Caco-2 (cell line): ENCODE measurements at regions of chr11 and their contacts with region 1.

Region 1: GRCh38 chr11:13907678-13908077 is 54.8 kb upstream of the SPON1 start:
- DNase-seq: no peak
- H3K4me3 ChIP-seq: no peak overlapping the region
- H3K4me3 Mint-ChIP-seq: no peak overlapping the region
- H3K27ac Mint-ChIP-seq: no peak overlapping the region
- H3K4me1 ChIP-seq: no peaks in the 10 kb centered on the region
- H3K4me1 Mint-ChIP-seq: no peaks in the 10 kb centered on the region
- H3K27me3 ChIP-seq: no peaks in the 10 kb centered on the region
- H3K27me3 Mint-ChIP-seq: peaks cover 6% of the 10 kb centered on the region
- CTCF ChIP-seq: no peak

Region 2: DNA sequence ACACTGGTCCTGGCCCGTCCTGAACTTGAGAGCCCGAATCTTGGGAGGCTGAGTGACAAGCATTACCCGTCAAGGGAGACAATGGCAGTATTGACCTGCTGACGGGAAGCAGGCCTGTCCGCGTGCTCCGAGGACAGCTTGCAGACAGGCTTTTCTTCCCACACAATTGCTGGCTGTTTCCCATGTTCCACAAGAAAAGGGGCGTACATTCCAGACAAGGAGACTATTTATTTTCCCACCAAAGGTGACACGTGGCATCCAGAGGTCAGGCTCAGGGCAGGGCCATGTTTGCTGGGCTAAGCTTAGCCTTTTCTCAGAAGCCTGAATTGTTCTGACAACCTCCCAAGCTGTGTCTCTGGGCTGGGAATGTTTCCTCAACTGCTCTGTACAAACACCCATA is 32.0 kb before region 1 on chr11:
- CTCF ChIA-PET with region 1: no interaction called
- POLR2A ChIA-PET with region 1: no interaction called
- intact Hi-C with region 1: loop called (anchors 5 kb)
- DNase-seq: peak; percentile 44 to 64
- H3K4me3 ChIP-seq: no peak overlapping the region
- H3K4me3 Mint-ChIP-seq: no peak overlapping the region
- H3K27ac Mint-ChIP-seq: no peak overlapping the region
- H3K4me1 ChIP-seq: peaks cover 9% of the 10 kb centered on the region; the same call in 1 of the 2 replicates
- H3K4me1 Mint-ChIP-seq: no peaks in the 10 kb centered on the region
- H3K27me3 ChIP-seq: no peaks in the 10 kb centered on the region
- H3K27me3 Mint-ChIP-seq: peaks cover 12% of the 10 kb centered on the region
- CTCF ChIP-seq: no peak